Astrocyte of the cerebellum (primary cell): ENCODE measurements at regions of chr9 and their contacts with region 1.

Region 1: DNA sequence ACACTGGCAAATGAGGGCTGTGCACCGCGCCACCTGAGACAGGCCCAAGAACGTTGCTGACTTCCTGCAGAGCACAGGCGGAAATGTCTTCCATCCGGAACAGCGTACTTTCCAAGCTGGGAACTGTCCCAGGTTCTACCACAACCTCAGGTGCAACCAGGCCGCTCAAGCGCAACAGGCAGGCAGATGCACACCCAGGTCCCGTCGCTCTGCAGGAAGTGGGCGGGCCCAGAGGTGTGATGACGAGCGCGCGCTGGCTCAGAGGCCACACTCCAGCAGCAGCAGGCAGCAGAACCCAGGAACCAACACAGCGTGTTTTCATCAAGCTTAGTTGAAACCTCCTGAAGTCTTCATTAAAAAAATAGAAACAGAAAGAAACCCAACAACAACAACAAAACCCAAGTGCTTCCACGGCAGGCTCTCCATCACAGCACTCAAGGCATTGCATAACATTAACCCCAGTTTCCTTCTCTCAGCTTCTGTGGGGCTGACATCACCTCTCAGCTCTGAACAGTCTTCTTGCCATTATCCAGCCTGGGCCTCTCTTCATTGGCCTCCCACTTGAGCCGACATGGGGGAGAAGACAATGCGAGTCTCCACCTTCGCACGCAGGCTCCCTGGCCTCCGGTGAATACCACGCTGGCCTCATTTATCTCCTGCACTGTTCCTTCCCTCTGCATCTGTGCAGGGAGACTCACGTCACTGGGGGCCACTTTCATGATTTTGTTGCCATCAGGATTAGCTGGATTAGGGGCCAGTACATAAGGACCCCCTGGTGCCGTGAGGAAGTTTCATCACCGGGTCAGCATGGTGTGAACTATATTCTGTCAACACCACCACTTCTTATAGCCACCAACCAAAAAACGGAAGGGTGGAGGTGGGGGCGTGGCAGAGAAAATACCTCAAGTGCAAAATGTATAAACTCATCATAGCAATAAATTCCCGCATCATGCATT is 22.1 kb downstream of the PTCH1 start:
- DNase-seq: no peak
- H3K4me3 ChIP-seq: peak overlapping the region; percentile 20
- CTCF ChIP-seq: no peak

Region 2: DNA sequence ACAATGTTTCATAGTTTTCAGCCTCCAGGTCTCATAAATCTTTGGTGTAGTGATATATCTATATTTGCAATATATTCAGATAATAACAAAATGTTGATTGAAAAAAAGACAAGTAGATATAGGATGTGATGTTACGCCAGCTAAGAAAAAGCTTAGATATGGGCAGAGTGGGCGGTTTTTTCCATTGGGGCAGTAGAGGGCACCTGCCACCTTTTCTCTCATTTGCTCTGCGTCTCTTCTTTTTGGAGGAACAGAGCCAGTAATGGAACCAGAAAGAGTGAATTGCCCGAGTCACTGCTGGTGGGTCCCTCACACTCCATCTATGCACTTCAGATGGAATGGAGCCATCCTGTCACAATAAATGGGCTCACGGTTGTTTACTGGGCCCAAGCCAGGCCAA is 115.1 kb before region 1 on chr9:
- in situ Hi-C with region 1: loop called (anchors 10 kb)
- DNase-seq: no peak
- H3K4me3 ChIP-seq: no peak overlapping the region
- CTCF ChIP-seq: no peak

Region 3: GRCh38 chr9:95440447-95440846 is 54.2 kb before region 1 on chr9:
- in situ Hi-C with region 1: loop called (anchors 5 kb)
- DNase-seq: no peak
- H3K4me3 ChIP-seq: no peak overlapping the region
- CTCF ChIP-seq: no peak

Region 4: DNA sequence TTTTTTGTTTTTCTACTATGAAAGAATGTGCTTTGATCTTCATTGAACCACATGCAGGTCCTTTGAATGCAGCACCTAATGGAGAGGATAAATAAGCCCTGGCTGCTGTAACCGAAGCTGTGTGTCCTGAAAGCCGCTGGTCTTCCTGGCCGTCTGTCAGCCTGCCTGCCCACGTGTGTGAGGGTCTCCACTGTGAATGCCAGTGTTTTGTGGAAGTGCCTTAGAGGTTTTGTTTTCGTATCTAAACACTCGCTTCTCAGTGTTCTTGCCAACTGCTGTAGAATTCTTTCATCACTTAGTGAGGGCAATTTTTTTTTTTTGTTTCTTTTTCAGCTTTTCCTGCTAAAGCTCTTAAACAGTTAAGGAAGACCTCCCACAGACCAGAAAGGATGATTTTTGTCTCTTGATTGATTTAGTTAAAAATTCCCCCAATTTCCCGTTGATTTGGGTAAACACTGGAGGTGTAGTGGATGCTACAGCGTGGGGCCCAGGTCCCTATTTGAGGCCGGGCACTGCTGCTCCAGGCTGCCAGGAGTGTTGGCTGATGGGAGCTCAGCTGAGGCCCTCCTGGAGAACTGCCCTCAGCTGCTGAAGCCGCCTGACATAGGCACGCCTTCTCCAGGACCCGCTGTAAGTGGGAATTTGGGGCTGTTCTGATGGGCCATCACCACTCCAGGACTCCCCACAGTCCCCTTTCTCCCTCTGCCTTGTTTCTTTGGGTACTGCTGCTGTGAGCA is 51.3 kb after region 1 on chr9:
- in situ Hi-C with region 1: no loop called
- DNase-seq: no peak
- H3K4me3 ChIP-seq: no peak overlapping the region
- CTCF ChIP-seq: no peak